ENCODE measurements at regions of chrX and their contacts with region 1.

Region 1: GRCh38 chrX:10189317-10190268 is 32.8 kb downstream of the CLCN4 start:
- DNase-seq: no peak
- ATAC-seq: peak; percentile 98
- H3K4me3 ChIP-seq: no peak overlapping the region
- H3K27ac ChIP-seq: no peak overlapping the region
- H3K4me1 ChIP-seq: no peaks in the 10 kb centered on the region
- H3K27me3 ChIP-seq: no peaks in the 10 kb centered on the region; a peak in 1 of 4 replicates
- CTCF ChIP-seq: peak; percentile 74 to 94 (median 81)
- EP300 ChIP-seq: no peak
- POLR2A ChIP-seq: no peak
- RAD21 ChIP-seq: peak; percentile 93

Region 2: GRCh38 chrX:10173316-10173900 is 16.2 kb before region 1 on chrX:
- CTCF ChIA-PET with region 1: interaction called, 17 read pairs
- POLR2A ChIA-PET with region 1: no interaction called
- RAD21 ChIA-PET with region 1: interaction called, 4 read pairs
- SMC1A ChIA-PET with region 1: interaction called, 5 read pairs
- in situ Hi-C with region 1: no loop called
- intact Hi-C with region 1: no loop called
- DNase-seq: no peak
- ATAC-seq: no peak
- H3K4me3 ChIP-seq: no peak overlapping the region
- H3K27ac ChIP-seq: no peak overlapping the region
- H3K4me1 ChIP-seq: no peaks in the 10 kb centered on the region
- H3K27me3 ChIP-seq: peaks cover 0 to 2% of the 10 kb centered on the region in 2 experiments; a peak in 1 of 4 replicates
- CTCF ChIP-seq: no peak
- EP300 ChIP-seq: no peak
- POLR2A ChIP-seq: no peak
- RAD21 ChIP-seq: no peak

Region 3: DNA sequence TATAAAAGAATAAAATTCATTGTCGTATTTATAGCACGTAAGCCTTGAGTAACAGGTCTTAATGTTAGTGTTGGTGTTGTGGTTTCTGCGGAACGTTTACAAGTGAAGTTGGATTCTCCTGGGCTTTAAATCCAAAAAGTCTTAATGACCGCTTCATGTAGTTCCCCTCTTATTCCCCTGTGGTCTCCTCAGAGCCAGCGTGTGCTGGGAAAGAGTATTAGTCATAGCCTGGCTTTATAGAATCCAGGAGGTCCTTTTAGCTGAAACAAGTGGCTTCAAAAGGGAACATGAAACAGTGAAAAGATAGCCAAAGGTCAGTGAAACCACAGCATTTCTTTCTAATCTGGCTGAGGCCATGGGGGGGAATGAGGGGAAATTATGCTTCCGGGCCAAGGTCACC is 46.3 kb after region 1 on chrX:
- CTCF ChIA-PET with region 1: interaction called, 12 read pairs
- POLR2A ChIA-PET with region 1: no interaction called
- RAD21 ChIA-PET with region 1: interaction called, 4 read pairs
- SMC1A ChIA-PET with region 1: interaction called, 5 read pairs
- in situ Hi-C with region 1: no loop called
- intact Hi-C with region 1: no loop called
- DNase-seq: no peak
- ATAC-seq: no peak
- H3K4me3 ChIP-seq: no peak overlapping the region
- H3K27ac ChIP-seq: no peak overlapping the region
- H3K4me1 ChIP-seq: no peaks in the 10 kb centered on the region
- H3K27me3 ChIP-seq: no peaks in the 10 kb centered on the region; a peak in 1 of 4 replicates
- CTCF ChIP-seq: no peak
- EP300 ChIP-seq: no peak
- POLR2A ChIP-seq: no peak
- RAD21 ChIP-seq: no peak

Region 4: GRCh38 chrX:10401239-10401638 is 211.6 kb after region 1 on chrX:
- CTCF ChIA-PET with region 1: interaction called, 9 read pairs
- POLR2A ChIA-PET with region 1: no interaction called
- RAD21 ChIA-PET with region 1: interaction called, 6 read pairs
- SMC1A ChIA-PET with region 1: interaction called, 13 read pairs
- in situ Hi-C with region 1: no loop called
- intact Hi-C with region 1: loop called (anchors 5 kb)
- DNase-seq: no peak
- ATAC-seq: no peak
- H3K4me3 ChIP-seq: no peak overlapping the region
- H3K27ac ChIP-seq: no peak overlapping the region
- H3K4me1 ChIP-seq: no peaks in the 10 kb centered on the region
- H3K27me3 ChIP-seq: no peaks in the 10 kb centered on the region
- CTCF ChIP-seq: no peak
- EP300 ChIP-seq: no peak
- POLR2A ChIP-seq: no peak
- RAD21 ChIP-seq: peak; percentile 21; the same call in 1 of the 2 replicates

Region 5: GRCh38 chrX:10615931-10616775 is 426.6 kb after region 1 on chrX:
- CTCF ChIA-PET with region 1: interaction called, 79 read pairs
- POLR2A ChIA-PET with region 1: no interaction called
- RAD21 ChIA-PET with region 1: interaction called, 21 read pairs
- SMC1A ChIA-PET with region 1: interaction called, 37 read pairs
- in situ Hi-C with region 1: loop called (anchors 5 kb)
- intact Hi-C with region 1: loop called (anchors 1 kb)
- DNase-seq: no peak
- ATAC-seq: peak; percentile 83
- H3K4me3 ChIP-seq: no peak overlapping the region
- H3K27ac ChIP-seq: no peak overlapping the region
- H3K4me1 ChIP-seq: no peaks in the 10 kb centered on the region
- H3K27me3 ChIP-seq: peaks cover 0 to 5% of the 10 kb centered on the region in 2 experiments
- CTCF ChIP-seq: peak; percentile 57 to 64 (median 60); a peak in 5 of 6 replicates
- EP300 ChIP-seq: no peak
- POLR2A ChIP-seq: no peak
- RAD21 ChIP-seq: peak; percentile 51

Region 6: DNA sequence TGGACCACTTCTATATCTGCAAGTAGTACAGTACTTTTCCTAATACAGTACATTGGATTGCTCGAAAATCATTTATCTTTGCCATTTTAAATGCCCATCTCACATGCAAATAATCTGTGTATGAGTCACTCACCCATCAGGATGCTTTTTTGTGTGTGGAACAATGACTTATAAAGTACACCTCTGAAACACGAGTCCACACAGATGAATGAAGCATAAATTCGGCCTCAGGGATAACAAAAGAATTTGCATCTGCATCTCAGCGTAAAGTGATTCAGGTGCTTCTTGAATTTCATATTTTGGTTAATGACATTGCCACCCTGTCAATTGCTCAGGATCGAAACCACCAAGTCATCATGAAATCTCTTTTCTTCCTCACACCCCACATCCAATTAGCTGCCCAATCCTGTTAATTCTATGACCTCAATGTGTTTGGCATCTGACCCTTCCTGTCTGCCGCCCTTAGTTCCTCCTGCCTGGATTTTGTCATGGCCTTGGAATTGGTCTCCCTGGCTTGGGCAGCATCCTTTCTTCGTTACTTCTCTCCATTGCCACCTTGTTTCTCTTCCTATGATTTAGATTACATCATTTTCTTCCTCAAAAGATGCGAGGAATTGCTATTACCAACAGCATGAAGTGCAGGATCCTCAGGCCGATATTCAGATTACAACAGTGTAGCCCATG is 592.4 kb after region 1 on chrX:
- CTCF ChIA-PET with region 1: interaction called, 11 read pairs
- POLR2A ChIA-PET with region 1: no interaction called
- RAD21 ChIA-PET with region 1: no interaction called
- SMC1A ChIA-PET with region 1: interaction called, 4 read pairs
- in situ Hi-C with region 1: no loop called
- intact Hi-C with region 1: no loop called
- DNase-seq: no peak
- ATAC-seq: no peak
- H3K4me3 ChIP-seq: no peak overlapping the region
- H3K27ac ChIP-seq: no peak overlapping the region
- H3K4me1 ChIP-seq: no peaks in the 10 kb centered on the region
- H3K27me3 ChIP-seq: no peaks in the 10 kb centered on the region
- CTCF ChIP-seq: no peak
- EP300 ChIP-seq: no peak
- POLR2A ChIP-seq: no peak
- RAD21 ChIP-seq: no peak

Region 7: DNA sequence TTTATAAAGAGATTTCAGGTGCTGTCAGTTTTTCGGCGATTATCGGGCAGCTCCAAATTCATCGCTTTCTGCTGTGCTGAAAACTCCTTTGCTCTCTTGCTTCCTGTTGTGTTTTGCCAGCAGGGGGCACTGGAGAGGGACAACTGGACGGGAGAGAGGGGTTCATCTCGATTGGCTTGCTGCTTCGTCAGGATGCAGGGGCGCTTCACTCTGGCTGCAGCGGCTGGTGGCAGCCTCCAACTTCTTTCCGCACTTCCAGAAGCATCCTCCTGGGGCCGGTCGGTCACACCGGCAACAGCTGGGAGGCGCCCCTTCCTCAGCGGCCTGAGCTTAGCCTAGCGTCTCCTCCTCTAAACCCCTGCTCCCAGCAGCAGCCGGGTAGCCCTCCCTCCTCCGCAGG is 1598.0 kb after region 1 on chrX:
- CTCF ChIA-PET with region 1: no interaction called
- POLR2A ChIA-PET with region 1: no interaction called
- RAD21 ChIA-PET with region 1: no interaction called
- SMC1A ChIA-PET with region 1: no interaction called
- in situ Hi-C with region 1: loop called (anchors 25 kb)
- intact Hi-C with region 1: no loop called
- DNase-seq: no peak
- ATAC-seq: no peak
- H3K4me3 ChIP-seq: no peak overlapping the region
- H3K27ac ChIP-seq: no peak overlapping the region
- H3K4me1 ChIP-seq: peaks cover 20% of the 10 kb centered on the region
- H3K27me3 ChIP-seq: no peaks in the 10 kb centered on the region
- CTCF ChIP-seq: peak; percentile 22 to 60 (median 33); a peak in 5 of 6 replicates
- EP300 ChIP-seq: no peak
- POLR2A ChIP-seq: no peak
- RAD21 ChIP-seq: peak; percentile 46